CD4-positive, alpha-beta memory T cell (primary cell): ENCODE measurements at regions of chr3 and their contacts with region 1.

Region 1: DNA sequence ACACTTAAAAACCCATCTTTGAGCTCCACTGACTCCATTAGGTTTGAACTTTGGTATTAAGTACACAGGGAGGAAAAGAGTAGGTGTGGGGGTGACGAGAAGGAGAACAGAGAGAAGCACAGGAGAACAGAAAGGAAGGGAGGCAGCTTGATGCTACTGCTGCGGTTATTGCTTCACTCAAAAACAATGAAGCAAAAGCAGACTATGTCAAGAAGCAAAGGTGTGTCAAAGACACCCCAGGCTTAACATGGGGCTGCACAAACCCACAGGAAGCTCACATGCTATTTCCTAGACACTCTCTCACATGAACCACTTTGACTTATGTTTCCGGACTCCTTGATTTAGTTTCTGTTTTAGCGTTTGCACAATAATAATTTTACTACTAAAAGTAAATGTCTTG is 961.0 kb upstream of the CFAP20DC start:
- DNase-seq: peak; percentile 79 to 86 (median 84)
- H3K4me3 ChIP-seq: peak overlapping the region; percentile 3 to 18
- H3K4me3 Mint-ChIP-seq: peak overlapping the region; percentile 67 to 88 (median 84)
- H3K27ac ChIP-seq: peak overlapping the region; percentile 47
- H3K27ac Mint-ChIP-seq: peak overlapping the region; percentile 91 to 99 (median 96)
- H3K4me1 ChIP-seq: peaks cover 95% of the 10 kb centered on the region
- H3K4me1 Mint-ChIP-seq: peaks cover 55 to 85% (median 73%) of the 10 kb centered on the region in 4 donors
- H3K27me3 ChIP-seq: no peaks in the 10 kb centered on the region
- H3K27me3 Mint-ChIP-seq: no peaks in the 10 kb centered on the region

Region 2: GRCh38 chr3:59450946-59451763 is 559.6 kb before region 1 on chr3:
- CTCF ChIA-PET with region 1: no interaction called
- POLR2A ChIA-PET with region 1: interaction called, 4 read pairs
- intact Hi-C with region 1: loop called (anchors 10 kb)
- DNase-seq: peak; percentile 79 to 88 (median 85)
- H3K4me3 ChIP-seq: peak overlapping the region in 1 of 2 donors; percentile 3
- H3K4me3 Mint-ChIP-seq: peak overlapping the region; percentile 48 to 84 (median 74)
- H3K27ac ChIP-seq: peak overlapping the region; percentile 72
- H3K27ac Mint-ChIP-seq: peak overlapping the region; percentile 95 to 99 (median 98)
- H3K4me1 ChIP-seq: peaks cover 70% of the 10 kb centered on the region
- H3K4me1 Mint-ChIP-seq: peaks cover 50 to 81% (median 71%) of the 10 kb centered on the region in 4 donors
- H3K27me3 ChIP-seq: no peaks in the 10 kb centered on the region
- H3K27me3 Mint-ChIP-seq: no peaks in the 10 kb centered on the region

Region 3: DNA sequence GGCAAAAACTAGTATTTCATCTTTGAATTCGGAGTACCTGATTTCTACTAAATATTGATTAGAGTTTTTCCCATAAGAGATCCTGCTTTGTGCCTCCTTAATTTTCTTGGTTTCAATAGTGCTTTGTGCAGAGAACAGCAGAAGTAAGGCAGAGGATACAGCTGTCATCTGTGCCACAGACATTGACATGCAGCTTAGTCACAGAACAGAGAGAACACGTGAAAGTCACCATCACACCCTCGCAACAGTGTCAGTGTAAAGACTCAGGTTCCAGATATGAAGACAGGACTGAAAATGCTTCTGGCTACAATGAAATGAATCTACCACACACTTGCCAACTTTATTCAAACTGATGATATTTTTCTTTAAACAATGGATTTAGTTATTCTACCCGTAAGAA is 18.2 kb before region 1 on chr3:
- CTCF ChIA-PET with region 1: interaction called, 4 read pairs
- POLR2A ChIA-PET with region 1: interaction called, 17 read pairs
- intact Hi-C with region 1: no loop called
- DNase-seq: no peak
- H3K4me3 ChIP-seq: no peak overlapping the region
- H3K4me3 Mint-ChIP-seq: no peak overlapping the region
- H3K27ac ChIP-seq: no peak overlapping the region
- H3K27ac Mint-ChIP-seq: peak overlapping the region in 3 of 7 donors; percentile 1 to 50 (median 7)
- H3K4me1 ChIP-seq: peaks cover 45% of the 10 kb centered on the region
- H3K4me1 Mint-ChIP-seq: peaks cover 39 to 54% (median 49%) of the 10 kb centered on the region in 4 donors
- H3K27me3 ChIP-seq: no peaks in the 10 kb centered on the region
- H3K27me3 Mint-ChIP-seq: no peaks in the 10 kb centered on the region

Region 4: DNA sequence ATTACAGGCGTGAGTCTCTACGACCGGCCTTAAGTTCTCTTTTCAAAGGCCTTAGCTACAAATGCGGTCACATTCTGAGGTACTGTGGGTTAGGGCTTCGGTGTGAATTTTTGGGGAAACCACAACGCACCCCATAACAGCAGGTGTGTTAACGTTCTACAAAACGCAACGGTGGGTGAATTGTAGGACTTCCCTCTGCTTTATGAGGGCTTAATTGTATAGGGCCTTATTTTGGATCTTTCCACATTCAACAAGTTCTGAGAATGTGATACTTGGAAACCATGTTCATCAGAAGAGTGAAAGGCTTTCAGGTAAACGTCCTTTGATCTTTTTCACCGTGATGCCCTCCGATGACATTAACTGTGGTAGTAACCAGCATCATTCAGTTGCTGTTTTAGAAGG is 37.7 kb after region 1 on chr3:
- CTCF ChIA-PET with region 1: interaction called, 3 read pairs
- POLR2A ChIA-PET with region 1: interaction called, 11 read pairs
- intact Hi-C with region 1: loop called (anchors 1 kb)
- DNase-seq: peak; percentile 54 to 73 (median 69)
- H3K4me3 ChIP-seq: peak overlapping the region in 1 of 2 donors; percentile 4
- H3K4me3 Mint-ChIP-seq: peak overlapping the region; percentile 67 to 87 (median 77)
- H3K27ac ChIP-seq: peak overlapping the region; percentile 36
- H3K27ac Mint-ChIP-seq: peak overlapping the region; percentile 93 to 97 (median 94)
- H3K4me1 ChIP-seq: peaks cover 67% of the 10 kb centered on the region
- H3K4me1 Mint-ChIP-seq: peaks cover 33 to 68% (median 48%) of the 10 kb centered on the region in 4 donors
- H3K27me3 ChIP-seq: no peaks in the 10 kb centered on the region
- H3K27me3 Mint-ChIP-seq: no peaks in the 10 kb centered on the region

Region 5: GRCh38 chr3:60081381-60082095 is 70.8 kb after region 1 on chr3:
- CTCF ChIA-PET with region 1: interaction called, 8 read pairs
- POLR2A ChIA-PET with region 1: interaction called, 15 read pairs
- intact Hi-C with region 1: loop called (anchors 1 kb)
- DNase-seq: peak in 4 of 5 donors; percentile 30 to 40 (median 36)
- H3K4me3 ChIP-seq: peak overlapping the region in 1 of 2 donors; percentile 27
- H3K4me3 Mint-ChIP-seq: peak overlapping the region; percentile 74 to 96 (median 84)
- H3K27ac ChIP-seq: no peak overlapping the region
- H3K27ac Mint-ChIP-seq: peak overlapping the region; percentile 70 to 94 (median 86)
- H3K4me1 ChIP-seq: peaks cover 43% of the 10 kb centered on the region
- H3K4me1 Mint-ChIP-seq: peaks cover 29 to 50% (median 41%) of the 10 kb centered on the region in 4 donors
- H3K27me3 ChIP-seq: no peaks in the 10 kb centered on the region
- H3K27me3 Mint-ChIP-seq: no peaks in the 10 kb centered on the region